Activated T-helper 1 cell treated with anti-CD3 and anti-CD28 coated beads, Interleukin-12 subunit alpha, Interleukin-12 subunit beta, Interleukin-2, Interleukin-4 antibody, amounts not matched to agents 30 ng/mL and 10 ng/mL and 1 ng/mL, durations not matched to agents 14 hours and 24 hours and 36 hours (primary cell): ENCODE measurements at regions of chr18 and their contacts with region 1.

Region 1: GRCh38 chr18:76709659-76710645 is 112.4 kb upstream of the ZNF236 start:
- DNase-seq: peak; percentile 49
- H3K4me3 Mint-ChIP-seq: no peak overlapping the region
- H3K27ac Mint-ChIP-seq: no peak overlapping the region
- H3K4me1 Mint-ChIP-seq: peaks cover 19% of the 10 kb centered on the region
- H3K27me3 Mint-ChIP-seq: peaks cover 11% of the 10 kb centered on the region

Region 2: DNA sequence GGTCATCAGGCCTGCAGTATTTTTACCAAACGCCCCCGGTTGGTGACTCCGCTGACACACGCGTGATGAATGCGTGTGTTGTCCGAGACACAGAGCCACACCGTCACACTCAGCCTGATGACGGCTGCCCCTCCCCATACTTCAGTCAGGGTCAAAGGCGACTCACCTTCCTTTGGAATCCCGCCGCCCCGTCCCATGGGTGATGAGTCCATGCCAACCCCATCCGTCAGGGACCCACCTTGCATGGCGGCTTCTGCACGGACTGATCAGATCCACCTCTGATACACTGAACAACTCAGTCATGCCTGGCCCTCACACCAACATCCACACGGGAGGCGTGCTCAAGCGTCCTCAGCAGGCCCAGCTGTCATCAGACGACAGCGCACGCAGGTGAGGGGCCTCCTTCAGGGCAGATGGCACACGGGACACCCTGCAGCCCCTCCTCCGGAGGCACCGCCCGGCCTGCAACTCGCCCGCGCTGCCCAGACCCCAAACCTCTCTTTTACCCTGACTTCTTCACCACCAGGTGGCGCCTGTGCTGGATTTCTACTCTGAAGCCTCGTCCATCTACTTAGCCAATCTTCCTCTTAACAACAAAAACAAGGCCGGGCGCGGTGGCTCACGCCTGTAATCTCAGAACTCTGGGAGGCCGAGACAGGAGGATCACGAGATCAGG is 304.1 kb before region 1 on chr18:
- intact Hi-C with region 1: loop called (anchors 1 kb)
- DNase-seq: peak; percentile 12
- H3K4me3 Mint-ChIP-seq: no peak overlapping the region
- H3K27ac Mint-ChIP-seq: no peak overlapping the region
- H3K4me1 Mint-ChIP-seq: peaks cover 7% of the 10 kb centered on the region
- H3K27me3 Mint-ChIP-seq: peaks cover 3% of the 10 kb centered on the region

Region 3: GRCh38 chr18:76721207-76721996 is 11.4 kb after region 1 on chr18:
- intact Hi-C with region 1: loop called (anchors 1 kb)
- DNase-seq: peak; percentile 83
- H3K4me3 Mint-ChIP-seq: peak overlapping the region; percentile 73
- H3K27ac Mint-ChIP-seq: peak overlapping the region; percentile 84
- H3K4me1 Mint-ChIP-seq: peaks cover 71% of the 10 kb centered on the region
- H3K27me3 Mint-ChIP-seq: no peaks in the 10 kb centered on the region